ENCODE measurements at regions of chr10 and their contacts with region 1.

Region 1: GRCh38 chr10:28179006-28179742 is 123.7 kb downstream of the MPP7 start:
- DNase-seq: no peak
- ATAC-seq: peak; percentile 48

Region 2: DNA sequence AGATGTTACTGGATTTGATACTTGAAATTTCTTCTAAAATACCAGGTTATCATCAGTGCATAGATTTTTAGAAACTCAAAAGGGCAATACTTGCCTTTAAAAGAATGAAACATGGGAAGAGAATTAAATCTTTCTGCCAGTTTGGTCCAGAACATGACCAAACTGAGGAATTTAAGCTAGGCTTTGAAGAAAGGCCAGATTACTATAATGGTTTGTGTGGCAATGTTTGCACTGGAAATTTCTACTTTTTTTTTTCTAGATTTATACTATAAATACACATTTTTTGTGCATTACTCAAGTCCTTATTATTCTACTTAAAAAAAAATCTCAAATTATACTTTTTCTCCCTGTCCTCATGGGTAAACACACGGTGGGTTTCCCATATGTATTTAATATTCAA is 442.8 kb before region 1 on chr10:
- intact Hi-C with region 1: loop called (anchors 10 kb)
- DNase-seq: no peak
- ATAC-seq: no peak

Region 3: DNA sequence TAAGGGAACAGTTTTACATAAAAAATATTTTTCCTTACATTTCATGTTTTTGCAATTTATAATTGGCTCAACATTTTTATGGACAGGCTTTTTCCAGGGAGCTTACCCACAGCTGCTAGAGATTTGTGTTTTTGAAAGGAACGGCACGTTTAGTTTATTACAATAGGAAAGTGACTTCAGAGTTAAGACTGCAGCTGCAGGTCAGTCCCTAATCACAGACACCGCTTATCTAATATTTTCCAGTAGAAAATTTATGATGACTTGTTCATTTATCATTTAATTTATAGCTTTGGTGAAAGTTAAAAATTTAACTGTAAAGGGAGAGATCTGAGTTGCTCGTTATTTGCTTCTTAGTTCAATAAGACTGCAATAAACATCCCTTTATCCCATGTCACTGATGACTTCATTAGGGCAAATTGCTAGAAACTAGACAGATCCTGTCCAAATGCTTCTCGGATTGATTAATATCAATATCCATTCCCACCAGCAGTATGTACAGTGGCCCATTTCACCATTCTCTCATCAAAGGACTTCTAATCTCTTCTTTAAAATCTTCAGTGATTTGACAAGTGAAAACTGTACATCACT is 83.3 kb before region 1 on chr10:
- intact Hi-C with region 1: no loop called
- DNase-seq: no peak
- ATAC-seq: no peak

Measured in left ventricle myocardium superior (tissue), 1 donor.